Right cardiac atrium (tissue), 5 donors: ENCODE measurements at regions of chr6 and their contacts with region 1.

Region 1: DNA sequence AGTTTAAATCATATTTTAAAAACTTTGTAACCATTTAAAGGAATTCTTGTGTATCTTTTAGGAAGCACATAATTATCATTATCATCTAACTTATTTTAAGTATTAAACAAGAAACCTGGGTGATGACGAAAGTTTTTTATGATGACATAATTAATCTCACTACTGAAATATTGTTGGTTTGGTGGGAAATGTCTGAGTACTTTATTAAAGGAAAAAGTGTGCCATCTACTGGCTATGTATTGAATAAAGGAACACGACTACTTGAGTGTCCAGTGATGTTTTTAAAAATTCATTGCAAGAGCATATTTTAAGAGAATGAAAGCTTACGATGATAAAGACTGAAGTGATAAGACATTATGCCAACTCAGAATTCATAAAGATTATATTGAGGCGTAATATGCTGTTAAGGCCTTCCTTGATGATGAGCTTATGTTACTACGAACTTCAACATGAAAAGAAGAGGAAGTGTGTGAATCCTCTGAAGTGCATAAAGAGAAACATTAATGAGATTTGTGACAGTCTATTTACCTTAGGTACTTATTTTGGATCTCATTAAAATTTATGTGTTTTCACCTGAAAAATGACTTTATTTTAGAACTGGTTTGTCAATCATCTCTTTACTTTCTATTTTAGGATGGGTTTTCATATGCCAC is 12.0 kb upstream of the TRMT11 start:
- DNase-seq: no peak
- ATAC-seq: peak; percentile 47 to 61
- H3K4me3 ChIP-seq: no peak overlapping the region
- H3K27ac ChIP-seq: no peak overlapping the region
- H3K4me1 ChIP-seq: no peaks in the 10 kb centered on the region
- H3K27me3 ChIP-seq: no peaks in the 10 kb centered on the region

Region 2: GRCh38 chr6:125301435-125302391 is 672.6 kb before region 1 on chr6 and contains the start of gene HDDC2:
- intact Hi-C with region 1: loop called in 2 of 4 experiments (anchors 10 kb)
- DNase-seq: peak; percentile 81 to 92 (median 92)
- ATAC-seq: peak; percentile 94 to 96
- H3K4me3 ChIP-seq: peak within 1 kb of the TSS; percentile 56
- H3K27ac ChIP-seq: peak within 1 kb of the TSS; percentile 61
- H3K4me1 ChIP-seq: no peaks in the 10 kb centered on the region
- H3K27me3 ChIP-seq: no peaks in the 10 kb centered on the region
- total RNA-seq, gene HDDC2: 83.0 to 103 (median 93.7) TPM

Region 3: DNA sequence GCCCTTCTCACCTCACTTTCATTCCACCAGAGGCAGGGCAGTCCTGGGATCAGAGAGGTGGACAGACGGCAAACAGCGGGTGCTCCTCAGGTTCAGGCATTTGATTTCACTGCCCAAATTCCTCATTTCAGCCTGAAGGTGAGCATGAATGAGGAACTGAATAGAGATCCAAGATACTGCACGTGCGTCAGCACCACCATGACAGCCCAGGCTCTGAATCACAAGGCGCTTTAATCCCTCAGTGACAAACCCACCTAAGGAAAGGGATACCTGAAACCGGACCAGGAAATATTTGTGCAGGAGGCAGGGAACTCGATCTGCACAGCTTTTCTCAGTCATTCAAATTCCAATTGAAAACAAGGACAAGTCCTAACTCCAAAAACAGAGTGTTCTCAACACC is 399.7 kb before region 1 on chr6:
- intact Hi-C with region 1: no loop called
- DNase-seq: no peak
- ATAC-seq: no peak
- H3K4me3 ChIP-seq: no peak overlapping the region
- H3K27ac ChIP-seq: no peak overlapping the region
- H3K4me1 ChIP-seq: no peaks in the 10 kb centered on the region
- H3K27me3 ChIP-seq: no peaks in the 10 kb centered on the region

Region 4: GRCh38 chr6:125779924-125780539 is 194.3 kb before region 1 on chr6:
- intact Hi-C with region 1: loop called in 1 of 4 experiments (anchors 5 kb)
- DNase-seq: peak; percentile 75 to 91 (median 88)
- ATAC-seq: peak; percentile 97 to 98
- H3K4me3 ChIP-seq: peak overlapping the region; percentile 90
- H3K27ac ChIP-seq: peak overlapping the region; percentile 96
- H3K4me1 ChIP-seq: no peaks in the 10 kb centered on the region
- H3K27me3 ChIP-seq: no peaks in the 10 kb centered on the region

Region 5: DNA sequence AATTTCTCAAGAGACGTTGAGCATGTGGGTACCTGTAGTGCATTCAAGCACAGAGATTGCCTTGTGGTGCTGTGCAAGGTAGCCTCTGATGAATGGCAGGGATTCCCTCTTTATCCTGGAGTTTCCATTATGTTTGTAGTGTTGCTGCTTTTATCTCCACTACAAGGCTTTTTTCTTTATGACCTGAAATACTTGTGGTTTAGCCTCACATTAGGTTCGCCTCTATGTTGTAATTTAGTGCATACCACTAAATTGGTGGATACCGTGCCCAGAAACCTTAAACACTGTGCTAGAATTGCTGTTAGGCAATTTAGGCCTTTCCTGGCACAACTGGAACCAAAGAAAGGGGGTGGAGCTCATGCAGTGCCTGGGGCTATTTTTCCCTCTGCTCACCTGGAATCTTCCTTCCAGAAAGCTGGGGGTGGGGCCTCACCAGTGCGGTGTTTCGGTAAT is 106.8 kb before region 1 on chr6:
- intact Hi-C with region 1: loop called in 1 of 4 experiments (anchors 10 kb)
- DNase-seq: no peak
- ATAC-seq: no peak
- H3K4me3 ChIP-seq: no peak overlapping the region
- H3K27ac ChIP-seq: no peak overlapping the region
- H3K4me1 ChIP-seq: peaks cover 4% of the 10 kb centered on the region
- H3K27me3 ChIP-seq: no peaks in the 10 kb centered on the region

Region 6: DNA sequence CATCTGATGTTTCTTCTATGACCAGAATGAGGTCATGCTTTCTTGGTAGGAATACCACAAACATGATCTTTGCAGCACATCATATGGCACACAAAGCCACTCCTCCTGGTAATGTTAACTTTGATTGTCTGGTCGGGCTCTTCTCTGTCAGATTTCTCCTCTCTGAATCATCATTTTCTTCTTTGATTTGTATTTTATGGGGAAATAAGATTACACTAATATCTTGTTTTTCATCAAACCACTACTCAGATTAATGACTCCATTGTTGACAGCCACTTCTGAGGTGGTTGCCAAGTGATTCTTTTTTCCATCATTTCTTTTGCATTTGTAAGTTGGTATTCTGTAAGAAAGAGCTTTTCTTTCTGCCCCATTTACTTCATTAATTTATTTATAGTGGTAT is 41.5 kb after region 1 on chr6:
- intact Hi-C with region 1: no loop called
- DNase-seq: no peak
- ATAC-seq: no peak
- H3K4me3 ChIP-seq: no peak overlapping the region
- H3K27ac ChIP-seq: no peak overlapping the region
- H3K4me1 ChIP-seq: no peaks in the 10 kb centered on the region
- H3K27me3 ChIP-seq: no peaks in the 10 kb centered on the region

Region 7: GRCh38 chr6:126182650-126183311 is 208.4 kb after region 1 on chr6:
- intact Hi-C with region 1: no loop called
- DNase-seq: no peak
- ATAC-seq: no peak
- H3K4me3 ChIP-seq: no peak overlapping the region
- H3K27ac ChIP-seq: no peak overlapping the region
- H3K4me1 ChIP-seq: no peaks in the 10 kb centered on the region
- H3K27me3 ChIP-seq: no peaks in the 10 kb centered on the region